Right ventricle myocardium inferior (tissue), 1 donor: ENCODE measurements at regions of chr15 and their contacts with region 1.

Region 1: DNA sequence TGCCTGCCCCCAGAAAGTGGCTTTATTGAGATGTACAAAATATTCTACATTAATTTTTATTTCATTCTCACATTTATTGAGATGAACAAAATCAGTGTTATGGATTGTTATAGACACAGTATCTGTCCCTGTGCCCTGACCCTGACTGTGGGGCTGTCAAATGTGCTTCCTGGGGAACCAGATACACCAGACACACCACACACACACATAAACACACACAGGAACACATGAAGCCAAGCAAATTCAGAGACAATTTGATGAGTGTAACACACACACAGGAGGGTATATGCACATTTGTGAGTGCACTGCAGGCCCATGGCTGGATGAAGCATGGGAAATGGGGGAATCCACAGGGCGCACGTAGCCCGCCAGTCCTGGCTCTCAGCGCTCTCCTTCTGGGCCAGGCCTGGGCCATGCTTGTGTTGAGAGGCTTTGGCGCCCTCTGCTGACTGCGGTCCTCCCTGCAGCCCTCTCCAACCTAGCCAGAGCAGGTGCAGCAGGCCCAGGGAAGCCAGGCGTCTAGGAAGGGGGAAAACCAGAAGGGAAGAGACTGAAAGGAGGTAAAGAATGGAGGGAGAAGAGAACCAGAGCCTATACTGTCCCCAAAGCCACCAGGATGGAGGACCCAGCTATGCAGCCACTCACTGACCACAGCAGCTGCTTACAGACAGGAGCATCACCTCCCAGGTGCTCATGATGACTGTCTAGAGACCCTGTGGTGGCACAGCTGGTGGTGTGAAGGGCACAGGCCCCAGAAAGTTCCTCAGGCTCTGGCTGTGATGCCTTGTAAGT is 18.0 kb upstream of the LOXL1 start:
- DNase-seq: peak; percentile 92
- ATAC-seq: peak; percentile 96

Region 2: DNA sequence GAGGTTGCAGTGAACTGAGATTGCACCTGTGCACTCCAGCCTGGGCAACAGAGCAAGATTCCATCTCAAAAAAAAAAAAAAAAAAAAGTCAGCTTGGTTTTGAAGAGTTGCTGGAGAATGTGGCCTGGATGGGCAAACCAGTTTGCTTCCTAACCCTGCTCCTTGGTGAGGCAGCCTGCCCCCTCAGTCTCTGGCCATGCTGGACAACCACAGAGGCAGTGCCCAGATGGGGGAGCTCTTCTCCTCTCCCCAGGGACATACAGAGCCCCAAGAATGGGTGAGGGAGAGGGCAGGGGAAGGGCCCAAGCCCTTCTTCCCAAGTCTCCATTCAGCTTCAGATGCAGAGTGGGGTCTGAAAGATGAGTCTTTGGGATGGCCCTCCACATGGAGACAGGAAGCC is 196.1 kb before region 1 on chr15:
- intact Hi-C with region 1: loop called (anchors 5 kb)
- DNase-seq: peak; percentile 14
- ATAC-seq: no peak

Region 3: GRCh38 chr15:73794443-73795133 is 113.6 kb before region 1 on chr15:
- intact Hi-C with region 1: loop called (anchors 10 kb)
- DNase-seq: no peak
- ATAC-seq: no peak

Region 4: GRCh38 chr15:73972984-73973682 is 64.9 kb after region 1 on chr15:
- intact Hi-C with region 1: no loop called
- DNase-seq: peak; percentile 89
- ATAC-seq: peak; percentile 92